HEK293 (cell line): ENCODE measurements at regions of chr9 and their contacts with region 1.

Region 1: GRCh38 chr9:127586537-127586936 is 25.5 kb upstream of the STXBP1 start:
- H3K4me3 ChIP-seq: no peak overlapping the region
- H3K27ac ChIP-seq: no peak overlapping the region
- H3K4me1 ChIP-seq: no peaks in the 10 kb centered on the region
- CTCF ChIP-seq: peak; percentile 72; the same call in 1 of the 2 replicates

Region 2: GRCh38 chr9:127503947-127504782 is 82.4 kb before region 1 on chr9:
- CTCF ChIA-PET with region 1: interaction called, 120 read pairs
- POLR2A ChIA-PET with region 1: no interaction called
- H3K4me3 ChIP-seq: no peak overlapping the region
- H3K27ac ChIP-seq: no peak overlapping the region
- H3K4me1 ChIP-seq: no peaks in the 10 kb centered on the region
- CTCF ChIP-seq: peak; percentile 79

Region 3: GRCh38 chr9:127525401-127526187 is 60.9 kb before region 1 on chr9:
- CTCF ChIA-PET with region 1: interaction called, 21 read pairs
- POLR2A ChIA-PET with region 1: no interaction called
- H3K4me3 ChIP-seq: no peak overlapping the region
- H3K27ac ChIP-seq: no peak overlapping the region
- H3K4me1 ChIP-seq: no peaks in the 10 kb centered on the region
- CTCF ChIP-seq: no peak

Region 4: GRCh38 chr9:127598839-127599548 is 12.5 kb after region 1 on chr9:
- CTCF ChIA-PET with region 1: interaction called, 16 read pairs
- POLR2A ChIA-PET with region 1: interaction called, 5 read pairs
- H3K4me3 ChIP-seq: no peak overlapping the region
- H3K27ac ChIP-seq: no peak overlapping the region
- H3K4me1 ChIP-seq: 0 out of 2 replicates have a peak, but pooled peaks cover 2% of the 10 kb centered on the region
- CTCF ChIP-seq: no peak

Region 5: GRCh38 chr9:127611899-127612790 is 25.6 kb after region 1 on chr9 and contains the start of gene STXBP1:
- CTCF ChIA-PET with region 1: interaction called, 18 read pairs
- POLR2A ChIA-PET with region 1: no interaction called
- H3K4me3 ChIP-seq: peak within 1 kb of the TSS; percentile 78
- H3K27ac ChIP-seq: peak within 1 kb of the TSS; percentile 46; the same call in 1 of the 2 replicates
- H3K4me1 ChIP-seq: peaks cover 13% of the 10 kb centered on the region
- CTCF ChIP-seq: peak; percentile 43; the same call in 1 of the 2 replicates

Region 6: DNA sequence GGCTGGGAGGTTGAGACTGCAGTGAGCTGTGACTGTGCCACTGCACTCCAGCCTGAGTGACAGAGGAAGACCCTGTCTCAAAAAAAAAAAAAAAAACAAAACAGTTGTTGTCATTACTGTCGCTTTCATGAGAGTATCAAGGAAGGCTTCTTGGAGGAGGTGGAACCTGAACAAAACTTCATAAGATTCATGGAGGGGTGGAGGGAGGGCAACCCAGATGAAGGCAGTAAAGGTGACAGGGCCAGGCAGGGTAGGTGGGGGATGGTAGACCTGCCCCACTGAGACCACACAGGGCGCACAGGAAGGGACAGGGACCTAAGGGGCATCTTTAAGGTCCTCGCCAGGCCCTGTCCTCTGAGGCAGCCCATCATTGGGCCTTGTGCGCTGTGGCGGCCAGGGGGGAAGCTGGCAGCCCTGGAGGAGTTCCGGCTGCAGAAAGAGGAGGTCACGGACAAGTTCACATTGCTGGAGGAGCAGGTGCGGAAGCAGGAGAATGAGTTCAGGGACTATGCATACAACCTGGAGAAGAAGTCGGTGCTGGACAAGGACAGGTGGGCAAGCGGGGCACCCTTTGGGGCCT is 123.8 kb after region 1 on chr9:
- CTCF ChIA-PET with region 1: no interaction called
- POLR2A ChIA-PET with region 1: no interaction called
- H3K4me3 ChIP-seq: no peak overlapping the region
- H3K27ac ChIP-seq: no peak overlapping the region
- H3K4me1 ChIP-seq: no peaks in the 10 kb centered on the region
- CTCF ChIP-seq: no peak

Region 7: GRCh38 chr9:127916665-127917613 is 330.4 kb after region 1 on chr9 and contains the start of gene ST6GALNAC4:
- CTCF ChIA-PET with region 1: interaction called, 25 read pairs
- POLR2A ChIA-PET with region 1: no interaction called
- H3K4me3 ChIP-seq: peak within 1 kb of the TSS; percentile 43
- H3K27ac ChIP-seq: no peak within 1 kb of the TSS
- H3K4me1 ChIP-seq: peaks cover 3% of the 10 kb centered on the region; the same call in 1 of the 2 replicates
- CTCF ChIP-seq: no peak